ENCODE measurements at regions of chr5 and their contacts with region 1.

Region 1: DNA sequence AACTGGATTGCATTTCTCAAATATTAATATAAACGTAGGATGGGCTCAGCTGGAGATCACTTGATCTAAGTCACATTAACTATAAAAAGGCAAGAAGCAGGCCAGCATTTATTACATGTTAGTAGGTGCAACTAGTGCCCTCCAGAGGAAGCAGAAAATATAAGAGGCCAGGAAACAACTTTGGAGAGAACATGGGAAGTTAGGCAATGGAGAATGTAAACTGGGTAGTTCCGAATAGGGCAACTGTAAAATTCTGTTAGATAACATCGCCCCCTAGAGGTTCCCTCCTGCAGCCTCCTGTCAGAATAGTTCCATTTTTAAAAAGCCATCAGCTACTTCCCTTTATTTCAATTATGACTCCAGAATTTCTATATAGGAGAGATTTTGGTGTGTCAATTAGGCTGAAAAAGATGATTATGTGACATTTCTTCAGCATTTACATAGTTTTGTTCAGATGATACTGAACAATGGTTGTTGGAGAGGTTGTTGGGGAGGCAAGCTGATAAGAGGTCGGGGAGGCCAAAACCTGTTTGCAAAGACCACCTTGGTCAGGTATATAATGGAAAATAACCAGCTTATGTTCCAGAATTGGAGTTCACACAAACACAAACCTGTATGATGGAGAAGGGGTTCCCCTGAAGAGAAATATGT is 22.4 kb downstream of the CCL28 start:
- DNase-seq: peak in 1 of 5 donors; percentile 51
- H3K4me3 ChIP-seq: no peak overlapping the region
- H3K27ac ChIP-seq: no peak overlapping the region
- H3K4me1 ChIP-seq: no peaks in the 10 kb centered on the region
- H3K27me3 ChIP-seq: no peaks in the 10 kb centered on the region
- CTCF ChIP-seq: peak in 1 of 3 donors; percentile 28
- EP300 ChIP-seq: no peak
- POLR2A ChIP-seq: no peak

Region 2: DNA sequence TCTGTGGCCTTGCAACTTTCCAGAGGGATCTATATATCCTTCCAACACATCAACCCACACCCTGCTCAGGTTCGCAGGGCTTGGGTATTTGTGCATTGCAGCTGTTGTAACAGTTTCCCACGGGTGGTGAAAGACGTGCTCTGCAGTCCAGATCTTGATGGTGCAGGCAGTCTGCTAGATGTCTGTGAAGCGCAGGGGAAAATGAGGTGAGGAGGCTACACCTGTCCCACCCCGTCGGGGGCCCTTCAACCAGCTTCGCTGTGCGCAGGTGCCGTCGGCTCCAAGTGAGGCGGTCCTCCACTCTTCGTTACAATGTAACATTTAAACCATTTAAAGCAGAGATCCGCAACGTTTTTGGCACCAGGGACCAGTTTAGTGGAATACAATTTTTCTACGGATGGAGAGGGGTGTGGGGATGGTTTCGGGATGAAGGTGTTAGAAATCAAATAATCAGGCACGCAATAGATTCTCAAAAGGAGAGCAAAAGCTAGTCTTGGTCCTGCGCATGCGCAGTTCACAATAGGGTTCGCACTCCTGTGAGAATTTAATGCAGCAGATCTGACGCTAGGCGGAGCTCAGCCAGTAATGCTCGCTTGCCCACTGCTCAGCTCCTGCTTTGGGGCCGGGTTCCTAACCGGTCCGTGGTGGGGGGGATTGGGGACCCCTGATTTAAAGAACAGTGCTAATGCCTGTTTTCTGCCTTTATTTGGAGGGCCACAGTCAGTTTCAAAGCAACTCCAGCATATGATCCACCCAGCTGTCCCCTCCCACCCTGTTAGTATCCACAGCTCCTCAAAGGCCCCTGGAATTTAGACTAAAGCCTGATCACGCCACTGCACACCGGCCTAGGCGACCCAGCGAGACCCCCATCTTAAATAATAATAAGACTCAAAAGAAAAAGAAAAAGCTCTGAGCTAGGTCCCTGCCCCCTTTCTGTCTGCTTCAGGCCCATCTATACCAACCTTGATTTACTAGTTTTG is 481.0 kb before region 1 on chr5:
- intact Hi-C with region 1: loop called in 1 of 4 experiments (anchors 10 kb)
- DNase-seq: peak; percentile 83 to 90 (median 88)
- H3K4me3 ChIP-seq: peak overlapping the region; percentile 31
- H3K27ac ChIP-seq: no peak overlapping the region
- H3K4me1 ChIP-seq: peaks cover 2% of the 10 kb centered on the region
- H3K27me3 ChIP-seq: no peaks in the 10 kb centered on the region
- CTCF ChIP-seq: peak; percentile 59 to 82 (median 61)
- EP300 ChIP-seq: no peak
- POLR2A ChIP-seq: no peak

Region 3: DNA sequence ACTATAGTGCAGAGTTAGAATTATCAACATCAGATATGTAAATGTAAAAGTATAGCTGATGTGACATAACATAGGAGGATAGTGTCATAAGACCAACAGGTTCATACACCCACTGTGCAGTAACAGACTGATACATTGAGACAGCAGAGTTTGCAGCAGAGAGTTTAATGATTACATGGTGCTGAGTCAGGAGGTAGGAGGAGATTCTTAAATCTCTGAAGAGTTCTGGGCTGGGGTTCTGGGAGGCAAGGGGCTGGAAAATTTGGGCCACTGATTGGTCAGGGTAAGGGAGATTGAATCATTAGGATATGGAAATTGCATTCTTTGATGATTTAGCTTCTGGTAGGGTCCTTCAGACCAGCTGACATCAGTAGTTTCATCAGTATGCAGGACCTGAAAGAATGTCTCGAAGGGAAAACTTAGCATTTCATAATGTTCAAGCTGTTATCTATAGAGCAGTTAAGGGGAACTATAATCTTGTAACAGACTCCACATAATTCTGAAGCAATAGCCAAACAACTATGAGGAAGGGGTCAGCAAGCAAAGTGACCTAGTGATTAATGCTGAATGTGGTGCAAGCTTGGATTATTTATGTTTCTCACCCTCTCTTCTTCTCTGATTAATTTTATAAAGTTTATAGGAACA is 13.2 kb before region 1 on chr5:
- intact Hi-C with region 1: no loop called
- DNase-seq: no peak
- H3K4me3 ChIP-seq: no peak overlapping the region
- H3K27ac ChIP-seq: no peak overlapping the region
- H3K4me1 ChIP-seq: no peaks in the 10 kb centered on the region
- H3K27me3 ChIP-seq: no peaks in the 10 kb centered on the region
- CTCF ChIP-seq: no peak
- EP300 ChIP-seq: no peak
- POLR2A ChIP-seq: no peak